ENCODE measurements at regions of chr13 and their contacts with region 1.

Region 1: DNA sequence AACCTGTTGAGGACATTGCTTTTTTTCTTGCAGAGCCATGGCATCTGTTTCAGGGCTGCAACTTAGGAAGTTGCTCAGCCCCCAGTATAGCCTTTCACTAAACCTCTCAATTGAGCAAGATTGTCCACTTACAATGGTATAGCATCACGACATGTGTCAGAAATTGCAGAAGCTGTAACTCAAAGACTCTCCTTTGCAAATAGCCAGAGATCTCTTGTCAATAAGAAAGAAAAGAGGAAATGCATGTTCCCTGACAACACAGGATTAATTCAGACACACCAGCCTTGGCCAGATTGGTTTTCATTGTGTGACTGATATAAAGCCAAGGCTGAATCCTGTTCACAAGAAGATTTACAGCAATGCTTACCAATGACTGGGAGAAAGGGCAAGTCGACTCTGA is 38.7 kb upstream of the CYSLTR2 start:
- DNase-seq: peak in 1 of 7 donors; percentile 29
- H3K4me3 ChIP-seq: no peak overlapping the region
- H3K27ac ChIP-seq: no peak overlapping the region
- H3K4me1 ChIP-seq: peaks cover 0 to 12% of the 10 kb centered on the region in 2 donors
- H3K27me3 ChIP-seq: no peaks in the 10 kb centered on the region
- CTCF ChIP-seq: no peak
- POLR2A ChIP-seq: no peak

Region 2: DNA sequence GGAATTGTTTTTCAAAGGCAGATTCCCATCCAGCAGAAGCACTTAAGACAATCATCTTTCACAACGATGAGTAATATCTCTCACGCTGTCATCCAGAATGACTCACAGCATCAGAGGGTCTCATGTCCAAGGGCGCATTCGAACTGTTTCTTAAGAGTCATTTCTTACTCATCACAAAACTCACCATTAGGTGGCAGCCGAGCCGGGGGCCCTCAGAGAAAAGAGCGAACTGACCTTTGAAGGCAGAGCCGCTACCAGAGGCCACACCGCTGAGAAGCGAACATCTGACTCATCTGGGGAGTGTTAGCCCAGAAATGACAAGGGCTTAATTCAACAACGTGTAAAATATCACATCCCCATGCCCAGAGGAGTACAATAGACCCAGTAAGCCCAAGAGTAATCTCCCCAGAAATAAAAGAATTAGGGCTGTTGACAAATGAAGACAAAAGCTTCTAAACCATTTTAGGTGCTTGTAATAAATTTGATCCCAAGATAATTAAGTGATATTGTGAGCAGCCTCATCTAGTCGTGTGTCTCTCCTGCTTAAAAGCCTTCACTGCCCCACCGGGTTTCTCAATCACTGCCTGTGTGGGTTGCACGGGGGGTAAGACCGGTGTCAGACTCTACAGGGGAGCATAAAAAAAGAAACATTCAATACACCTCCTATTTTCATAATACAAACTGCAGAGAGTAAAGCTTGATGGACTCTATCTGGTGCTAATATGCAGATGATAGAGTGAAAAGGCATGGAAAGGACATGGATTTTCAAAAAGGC is 134.8 kb after region 1 on chr13:
- intact Hi-C with region 1: loop called in 1 of 2 experiments (anchors 10 kb)
- DNase-seq: peak; percentile 90 to 97 (median 95)
- H3K4me3 ChIP-seq: no peak overlapping the region
- H3K27ac ChIP-seq: peak overlapping the region; percentile 35 to 84 (median 82)
- H3K4me1 ChIP-seq: peaks cover 27% of the 10 kb centered on the region in 2 donors
- H3K27me3 ChIP-seq: no peaks in the 10 kb centered on the region
- CTCF ChIP-seq: peak; percentile 24 to 60 (median 49)
- POLR2A ChIP-seq: peak in 1 of 2 donors; percentile 50

Region 3: DNA sequence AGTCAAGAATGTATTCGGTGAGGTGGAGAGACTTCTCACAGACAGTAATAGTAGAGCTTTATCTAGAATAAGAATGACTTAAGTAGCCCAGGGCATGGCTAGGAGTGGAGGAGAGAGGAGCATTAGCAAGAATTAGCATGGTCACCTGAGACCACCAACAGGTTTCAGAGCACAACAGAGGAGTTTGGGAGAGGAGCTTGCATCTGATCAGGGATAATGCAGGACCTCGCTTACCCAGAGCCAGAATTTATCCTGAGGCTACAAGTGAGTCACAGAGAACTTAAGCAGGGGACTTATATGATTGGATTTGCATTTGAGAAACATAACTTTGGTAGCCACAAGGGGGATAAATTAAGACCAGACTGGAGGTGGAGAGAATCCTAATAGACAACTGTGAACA is 258.5 kb after region 1 on chr13:
- intact Hi-C with region 1: no loop called
- DNase-seq: no peak
- H3K4me3 ChIP-seq: no peak overlapping the region
- H3K27ac ChIP-seq: no peak overlapping the region
- H3K4me1 ChIP-seq: no peaks in the 10 kb centered on the region
- H3K27me3 ChIP-seq: no peaks in the 10 kb centered on the region
- CTCF ChIP-seq: peak in 1 of 6 experiments; percentile 1
- POLR2A ChIP-seq: no peak

Region 4: GRCh38 chr13:49549289-49549688 is 934.2 kb after region 1 on chr13:
- intact Hi-C with region 1: no loop called
- DNase-seq: no peak
- H3K4me3 ChIP-seq: no peak overlapping the region
- H3K27ac ChIP-seq: no peak overlapping the region
- H3K4me1 ChIP-seq: no peaks in the 10 kb centered on the region
- H3K27me3 ChIP-seq: no peaks in the 10 kb centered on the region
- CTCF ChIP-seq: peak in 1 of 6 experiments; percentile 8
- POLR2A ChIP-seq: no peak

Measured in adrenal gland (tissue), 19 donors.